Colonic mucosa (tissue), 4 donors: ENCODE measurements at regions of chr17 and their contacts with region 1.

Region 1: GRCh38 chr17:28252436-28252835 is 66.6 kb upstream of the TMEM97 start:
- DNase-seq: no peak
- H3K4me3 ChIP-seq: no peak overlapping the region
- H3K27ac ChIP-seq: no peak overlapping the region
- H3K4me1 ChIP-seq: no peaks in the 10 kb centered on the region
- H3K27me3 ChIP-seq: no peaks in the 10 kb centered on the region
- CTCF ChIP-seq: no peak

Region 2: GRCh38 chr17:27805520-27806146 is 446.8 kb before region 1 on chr17:
- intact Hi-C with region 1: loop called (anchors 10 kb)
- DNase-seq: peak; percentile 93
- H3K4me3 ChIP-seq: peak overlapping the region; percentile 28
- H3K27ac ChIP-seq: peak overlapping the region; percentile 50
- H3K4me1 ChIP-seq: peaks cover 11% of the 10 kb centered on the region
- H3K27me3 ChIP-seq: no peaks in the 10 kb centered on the region
- CTCF ChIP-seq: peak; percentile 68

Region 3: GRCh38 chr17:27892866-27893769 is 359.3 kb before region 1 on chr17 and contains the start of gene LYRM9:
- intact Hi-C with region 1: loop called (anchors 5 kb)
- DNase-seq: peak; percentile 92
- H3K4me3 ChIP-seq: peak within 1 kb of the TSS; percentile 75
- H3K27ac ChIP-seq: peak within 1 kb of the TSS; percentile 78
- H3K4me1 ChIP-seq: no peaks in the 10 kb centered on the region
- H3K27me3 ChIP-seq: no peaks in the 10 kb centered on the region
- CTCF ChIP-seq: peak; percentile 74
- total RNA-seq, gene LYRM9: 2.7 to 2.9 TPM

Region 4: GRCh38 chr17:28118362-28118761 is 134.1 kb before region 1 on chr17:
- intact Hi-C with region 1: no loop called
- DNase-seq: no peak
- H3K4me3 ChIP-seq: no peak overlapping the region
- H3K27ac ChIP-seq: no peak overlapping the region
- H3K4me1 ChIP-seq: no peaks in the 10 kb centered on the region
- H3K27me3 ChIP-seq: no peaks in the 10 kb centered on the region
- CTCF ChIP-seq: no peak